GM12878 (cell line): ENCODE measurements at regions of chr13 and their contacts with region 1.

Region 1: GRCh38 chr13:58190577-58190976 is 559.0 kb downstream of the PCDH17 start:
- DNase-seq: no peak
- ATAC-seq: no peak
- H3K4me3 ChIP-seq: no peak overlapping the region
- H3K27ac ChIP-seq: no peak overlapping the region
- H3K4me1 ChIP-seq: no peaks in the 10 kb centered on the region
- H3K27me3 ChIP-seq: no peaks in the 10 kb centered on the region
- CTCF ChIP-seq: no peak
- EP300 ChIP-seq: no peak
- POLR2A ChIP-seq: no peak
- RAD21 ChIP-seq: no peak

Region 2: DNA sequence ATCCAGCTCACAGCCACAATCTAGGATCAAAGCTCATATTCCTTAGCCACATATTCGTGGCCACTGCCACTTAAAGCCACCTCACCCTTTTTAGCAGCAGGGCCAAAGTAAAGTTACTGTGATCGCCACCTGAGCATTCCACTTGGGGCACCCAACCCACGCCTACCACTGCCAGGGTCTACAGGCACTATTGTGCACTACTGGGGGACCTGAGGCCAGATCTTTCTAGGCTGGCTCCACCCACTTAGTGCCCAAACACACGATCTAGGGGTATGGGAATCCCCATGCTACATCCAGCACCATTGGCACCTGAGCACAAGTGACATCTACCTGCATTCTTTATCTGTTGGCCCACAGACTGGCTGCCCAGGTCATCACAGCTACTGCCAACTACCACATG is 1567.7 kb before region 1 on chr13:
- CTCF ChIA-PET with region 1: no interaction called
- POLR2A ChIA-PET with region 1: interaction called, 11 read pairs
- RAD21 ChIA-PET with region 1: no interaction called
- SMC1A ChIA-PET with region 1: no interaction called
- in situ Hi-C with region 1: no loop called
- intact Hi-C with region 1: no loop called
- DNase-seq: no peak
- ATAC-seq: no peak
- H3K4me3 ChIP-seq: no peak overlapping the region
- H3K27ac ChIP-seq: no peak overlapping the region
- H3K4me1 ChIP-seq: no peaks in the 10 kb centered on the region
- H3K27me3 ChIP-seq: no peaks in the 10 kb centered on the region
- CTCF ChIP-seq: no peak
- EP300 ChIP-seq: no peak
- POLR2A ChIP-seq: no peak
- RAD21 ChIP-seq: no peak

Region 3: DNA sequence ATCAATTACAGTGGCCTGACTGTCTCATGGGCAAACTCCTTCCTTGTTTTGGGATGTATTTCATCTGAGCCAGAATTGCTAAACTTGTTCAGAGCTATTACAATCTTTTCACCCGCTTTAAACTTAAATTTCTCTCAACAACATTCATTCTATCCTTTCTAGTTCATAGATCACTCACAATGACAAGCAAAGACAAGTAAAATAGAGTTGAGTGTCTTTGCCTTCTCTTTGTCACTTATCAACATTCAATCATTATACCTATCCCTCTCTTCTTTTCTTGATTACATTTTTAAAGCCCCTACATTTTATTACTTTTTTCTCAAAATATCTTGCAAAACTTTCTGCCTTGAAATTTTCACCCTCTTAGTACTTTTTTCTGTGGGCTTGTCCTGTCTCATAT is 554.1 kb after region 1 on chr13:
- CTCF ChIA-PET with region 1: no interaction called
- POLR2A ChIA-PET with region 1: no interaction called
- RAD21 ChIA-PET with region 1: no interaction called
- SMC1A ChIA-PET with region 1: no interaction called
- in situ Hi-C with region 1: no loop called
- intact Hi-C with region 1: no loop called
- DNase-seq: no peak
- ATAC-seq: no peak
- H3K4me3 ChIP-seq: no peak overlapping the region
- H3K27ac ChIP-seq: no peak overlapping the region
- H3K4me1 ChIP-seq: no peaks in the 10 kb centered on the region
- H3K27me3 ChIP-seq: no peaks in the 10 kb centered on the region
- CTCF ChIP-seq: no peak
- EP300 ChIP-seq: no peak
- POLR2A ChIP-seq: no peak
- RAD21 ChIP-seq: no peak